ENCODE measurements at regions of chr19 and their contacts with region 1.

Region 1: GRCh38 chr19:14366498-14366915 is 14.7 kb upstream of the ADGRE5 start:
- DNase-seq: peak; percentile 86
- H3K4me3 Mint-ChIP-seq: peak overlapping the region; percentile 74
- H3K27ac Mint-ChIP-seq: peak overlapping the region; percentile 97
- H3K4me1 Mint-ChIP-seq: peaks cover 80% of the 10 kb centered on the region
- H3K27me3 Mint-ChIP-seq: no peaks in the 10 kb centered on the region

Region 2: GRCh38 chr19:13846557-13847406 is 519.7 kb before region 1 on chr19:
- intact Hi-C with region 1: loop called (anchors 2 kb)
- DNase-seq: peak; percentile 96
- H3K4me3 Mint-ChIP-seq: peak overlapping the region; percentile 86
- H3K27ac Mint-ChIP-seq: peak overlapping the region; percentile 97
- H3K4me1 Mint-ChIP-seq: peaks cover 45% of the 10 kb centered on the region
- H3K27me3 Mint-ChIP-seq: no peaks in the 10 kb centered on the region

Region 3: DNA sequence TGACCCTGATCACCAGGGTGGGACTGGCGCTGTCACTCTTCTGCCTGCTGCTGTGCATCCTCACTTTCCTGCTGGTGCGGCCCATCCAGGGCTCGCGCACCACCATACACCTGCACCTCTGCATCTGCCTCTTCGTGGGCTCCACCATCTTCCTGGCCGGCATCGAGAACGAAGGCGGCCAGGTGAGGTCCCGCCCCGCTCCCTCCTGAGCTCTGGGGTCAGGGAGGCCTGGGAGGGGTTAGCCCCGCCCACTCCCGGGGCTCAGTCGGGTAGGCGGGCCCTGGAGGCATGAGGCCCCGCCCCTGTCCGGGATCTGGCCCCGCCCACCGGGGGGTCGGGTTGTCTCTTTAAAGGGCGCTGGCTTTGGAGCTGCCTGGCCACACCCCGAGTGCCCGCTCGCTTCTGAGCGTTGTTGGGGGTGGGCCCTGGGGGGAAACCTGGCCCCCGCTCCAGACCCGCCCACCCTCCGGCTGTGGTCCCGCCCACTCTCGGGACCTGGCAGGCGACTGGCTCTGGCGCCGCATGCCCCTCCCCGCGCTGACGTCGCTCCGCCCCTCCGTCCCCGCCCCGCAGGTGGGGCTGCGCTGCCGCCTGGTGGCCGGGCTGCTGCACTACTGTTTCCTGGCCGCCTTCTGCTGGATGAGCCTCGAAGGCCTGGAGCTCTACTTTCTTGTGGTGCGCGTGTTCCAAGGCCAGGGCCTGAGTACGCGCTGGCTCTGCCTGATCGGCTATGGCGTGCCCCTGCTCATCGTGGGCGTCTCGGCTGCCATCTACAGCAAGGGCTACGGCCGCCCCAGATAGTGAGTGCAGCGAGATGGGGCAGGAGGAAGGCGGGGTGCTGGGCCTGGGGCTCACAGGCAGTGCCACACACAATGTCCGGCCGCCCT is 39.5 kb after region 1 on chr19:
- intact Hi-C with region 1: loop called (anchors 1 kb)
- DNase-seq: peak; percentile 85
- H3K4me3 Mint-ChIP-seq: no peak overlapping the region
- H3K27ac Mint-ChIP-seq: peak overlapping the region; percentile 65
- H3K4me1 Mint-ChIP-seq: no peaks in the 10 kb centered on the region
- H3K27me3 Mint-ChIP-seq: no peaks in the 10 kb centered on the region

Region 4: GRCh38 chr19:14472202-14472938 is 105.9 kb after region 1 on chr19:
- intact Hi-C with region 1: loop called (anchors 5 kb)
- DNase-seq: peak; percentile 73
- H3K4me3 Mint-ChIP-seq: peak overlapping the region; percentile 47
- H3K27ac Mint-ChIP-seq: no peak overlapping the region
- H3K4me1 Mint-ChIP-seq: peaks cover 31% of the 10 kb centered on the region
- H3K27me3 Mint-ChIP-seq: peaks cover 17% of the 10 kb centered on the region

Region 5: DNA sequence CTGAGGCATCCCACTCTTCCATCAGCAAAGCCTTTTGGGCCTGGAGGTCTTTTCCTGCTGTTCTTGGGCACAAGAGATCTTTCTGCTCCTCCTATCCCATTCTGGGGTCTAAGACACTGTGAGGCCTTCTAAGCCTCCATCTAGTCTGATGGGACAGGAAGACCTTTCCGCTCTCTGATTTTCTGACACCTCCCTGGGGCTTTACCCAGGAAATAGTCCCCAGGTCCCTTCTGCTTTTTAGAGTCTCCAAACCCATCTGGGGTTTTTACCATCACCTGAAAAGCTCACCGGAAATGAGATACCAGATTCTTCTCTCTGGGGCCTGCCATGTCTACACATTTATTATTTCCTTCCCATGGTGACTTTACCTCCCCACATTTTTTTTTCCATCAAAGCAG is 237.5 kb after region 1 on chr19:
- intact Hi-C with region 1: no loop called
- DNase-seq: no peak
- H3K4me3 Mint-ChIP-seq: no peak overlapping the region
- H3K27ac Mint-ChIP-seq: no peak overlapping the region
- H3K4me1 Mint-ChIP-seq: no peaks in the 10 kb centered on the region
- H3K27me3 Mint-ChIP-seq: no peaks in the 10 kb centered on the region

Region 6: DNA sequence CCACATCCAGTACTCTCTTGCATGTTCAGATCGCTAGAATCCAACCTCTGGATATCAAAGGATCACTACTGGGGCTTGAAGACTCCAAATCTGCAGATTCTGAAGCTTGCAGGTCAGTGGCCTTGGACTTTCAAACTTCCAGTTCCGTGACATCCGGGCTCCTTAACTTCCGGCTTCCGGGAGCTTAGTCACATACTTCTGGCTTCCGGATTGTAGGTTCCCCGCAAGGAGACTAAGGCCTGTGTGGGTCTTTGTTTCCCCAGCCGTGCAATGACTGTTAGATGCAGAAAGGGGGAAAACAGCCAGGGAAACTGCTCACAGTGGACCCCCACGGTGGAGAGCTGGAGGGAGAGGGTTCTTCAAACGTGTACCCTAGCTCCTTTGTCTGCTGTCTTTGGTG is 364.7 kb after region 1 on chr19:
- intact Hi-C with region 1: no loop called
- DNase-seq: no peak
- H3K4me3 Mint-ChIP-seq: no peak overlapping the region
- H3K27ac Mint-ChIP-seq: no peak overlapping the region
- H3K4me1 Mint-ChIP-seq: no peaks in the 10 kb centered on the region
- H3K27me3 Mint-ChIP-seq: peaks cover 1% of the 10 kb centered on the region

Measured in activated T-helper 1 cell treated with anti-CD3 and anti-CD28 coated beads, Interleukin-12 subunit alpha, Interleukin-12 subunit beta, Interleukin-2, Interleukin-4 antibody, amounts not matched to agents 30 ng/mL and 10 ng/mL and 1 ng/mL, durations not matched to agents 14 hours and 24 hours and 36 hours (primary cell).